ENCODE measurements at regions of chr7 and their contacts with region 1.

Region 1: GRCh38 chr7:41608447-41608846 is 94.4 kb downstream of the INHBA start:
- DNase-seq: no peak
- H3K4me3 Mint-ChIP-seq: no peak overlapping the region
- H3K27ac Mint-ChIP-seq: no peak overlapping the region
- H3K4me1 Mint-ChIP-seq: peaks cover 8% of the 10 kb centered on the region
- H3K27me3 Mint-ChIP-seq: no peaks in the 10 kb centered on the region
- CTCF ChIP-seq: no peak

Region 2: GRCh38 chr7:41383596-41383995 is 224.9 kb before region 1 on chr7:
- CTCF ChIA-PET with region 1: no interaction called
- intact Hi-C with region 1: no loop called
- DNase-seq: no peak
- H3K4me3 Mint-ChIP-seq: no peak overlapping the region
- H3K27ac Mint-ChIP-seq: no peak overlapping the region
- H3K4me1 Mint-ChIP-seq: no peaks in the 10 kb centered on the region
- H3K27me3 Mint-ChIP-seq: no peaks in the 10 kb centered on the region
- CTCF ChIP-seq: no peak

Region 3: DNA sequence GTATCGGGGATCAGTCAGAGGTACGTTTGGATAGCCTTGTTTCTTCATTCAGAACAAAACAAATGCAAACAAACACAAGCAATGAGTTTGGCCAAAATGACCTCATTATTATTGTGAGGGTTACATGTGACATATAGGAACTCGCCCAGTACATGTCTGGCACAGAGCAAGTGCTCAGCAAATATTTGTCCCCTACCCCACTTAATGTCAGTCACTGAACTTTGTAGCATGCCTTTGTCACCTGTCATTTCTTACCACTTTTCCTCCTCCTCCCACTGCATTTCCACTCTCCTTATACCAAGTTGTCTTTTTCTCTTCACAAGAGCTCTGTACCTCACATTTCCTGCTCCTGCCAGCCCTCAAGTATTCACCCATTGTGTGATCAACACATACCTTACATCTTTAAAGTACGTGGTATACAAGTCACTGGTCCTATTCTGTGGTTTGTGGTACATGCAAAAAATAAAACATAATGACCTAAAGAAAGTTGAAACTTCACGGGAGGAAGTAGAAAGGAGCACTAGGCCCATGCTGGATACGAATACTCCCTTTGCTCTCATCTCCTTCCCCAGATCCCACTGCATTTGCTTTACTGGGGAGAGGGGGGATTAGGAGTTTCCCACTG is 141.6 kb before region 1 on chr7:
- CTCF ChIA-PET with region 1: no interaction called
- intact Hi-C with region 1: no loop called
- DNase-seq: no peak
- H3K4me3 Mint-ChIP-seq: no peak overlapping the region
- H3K27ac Mint-ChIP-seq: no peak overlapping the region
- H3K4me1 Mint-ChIP-seq: peaks cover 14% of the 10 kb centered on the region
- H3K27me3 Mint-ChIP-seq: no peaks in the 10 kb centered on the region
- CTCF ChIP-seq: no peak

Region 4: GRCh38 chr7:41559426-41559825 is 49.0 kb before region 1 on chr7:
- CTCF ChIA-PET with region 1: interaction called, 3 read pairs
- intact Hi-C with region 1: loop called (anchors 5 kb)
- DNase-seq: peak; percentile 24
- H3K4me3 Mint-ChIP-seq: no peak overlapping the region
- H3K27ac Mint-ChIP-seq: no peak overlapping the region
- H3K4me1 Mint-ChIP-seq: peaks cover 7% of the 10 kb centered on the region
- H3K27me3 Mint-ChIP-seq: no peaks in the 10 kb centered on the region
- CTCF ChIP-seq: no peak

Region 5: GRCh38 chr7:41573018-41573417 is 35.4 kb before region 1 on chr7:
- CTCF ChIA-PET with region 1: interaction called, 3 read pairs
- intact Hi-C with region 1: loop called (anchors 5 kb)
- DNase-seq: peak; percentile 13
- H3K4me3 Mint-ChIP-seq: no peak overlapping the region
- H3K27ac Mint-ChIP-seq: no peak overlapping the region
- H3K4me1 Mint-ChIP-seq: peaks cover 25% of the 10 kb centered on the region
- H3K27me3 Mint-ChIP-seq: no peaks in the 10 kb centered on the region
- CTCF ChIP-seq: no peak

Region 6: GRCh38 chr7:42460933-42461332 is 852.5 kb after region 1 on chr7:
- CTCF ChIA-PET with region 1: no interaction called
- intact Hi-C with region 1: no loop called
- DNase-seq: no peak
- H3K4me3 Mint-ChIP-seq: no peak overlapping the region
- H3K27ac Mint-ChIP-seq: no peak overlapping the region
- H3K4me1 Mint-ChIP-seq: no peaks in the 10 kb centered on the region
- H3K27me3 Mint-ChIP-seq: no peaks in the 10 kb centered on the region
- CTCF ChIP-seq: no peak

Measured in Calu3 (cell line).